ENCODE measurements at regions of chr3 and their contacts with region 1.

Region 1: GRCh38 chr3:72938471-72939265 is 50.8 kb downstream of the GXYLT2 start:
- DNase-seq: peak; percentile 74
- H3K4me3 ChIP-seq: no peak overlapping the region; a peak in 1 of 4 replicates
- H3K27ac ChIP-seq: peak overlapping the region; percentile 36 to 50
- H3K4me1 ChIP-seq: peaks cover 0 to 3% of the 10 kb centered on the region in 2 experiments; a peak in 2 of 4 replicates
- H3K27me3 ChIP-seq: no peaks in the 10 kb centered on the region
- CTCF ChIP-seq: peak; percentile 72
- EP300 ChIP-seq: no peak
- RAD21 ChIP-seq: peak; percentile 68

Region 2: DNA sequence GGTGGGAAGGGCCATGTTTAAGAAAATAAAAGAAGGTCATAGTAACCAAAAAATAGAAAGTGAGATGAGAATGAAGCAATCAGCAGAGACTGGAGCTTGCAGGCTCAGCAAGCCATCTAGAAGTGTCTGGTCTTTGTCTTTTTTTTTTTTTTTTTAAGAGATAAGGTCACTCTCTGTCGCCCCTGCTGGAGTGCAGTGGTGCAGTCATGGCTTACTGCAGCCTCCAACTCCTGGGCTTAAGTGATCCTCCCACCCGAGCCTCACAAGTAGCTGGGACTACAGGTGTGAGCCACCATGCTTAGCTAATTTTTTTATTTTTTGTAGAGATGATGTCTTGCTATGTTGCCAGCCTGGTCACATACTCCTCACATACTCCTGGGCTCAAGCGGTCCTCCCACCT is 14.6 kb before region 1 on chr3:
- CTCF ChIA-PET with region 1: interaction called, 14 read pairs
- POLR2A ChIA-PET with region 1: no interaction called
- DNase-seq: no peak
- H3K4me3 ChIP-seq: no peak overlapping the region
- H3K27ac ChIP-seq: no peak overlapping the region
- H3K4me1 ChIP-seq: no peaks in the 10 kb centered on the region
- H3K27me3 ChIP-seq: no peaks in the 10 kb centered on the region
- CTCF ChIP-seq: peak; percentile 28; the same call in 1 of the 2 replicates
- EP300 ChIP-seq: no peak
- RAD21 ChIP-seq: no peak

Region 3: DNA sequence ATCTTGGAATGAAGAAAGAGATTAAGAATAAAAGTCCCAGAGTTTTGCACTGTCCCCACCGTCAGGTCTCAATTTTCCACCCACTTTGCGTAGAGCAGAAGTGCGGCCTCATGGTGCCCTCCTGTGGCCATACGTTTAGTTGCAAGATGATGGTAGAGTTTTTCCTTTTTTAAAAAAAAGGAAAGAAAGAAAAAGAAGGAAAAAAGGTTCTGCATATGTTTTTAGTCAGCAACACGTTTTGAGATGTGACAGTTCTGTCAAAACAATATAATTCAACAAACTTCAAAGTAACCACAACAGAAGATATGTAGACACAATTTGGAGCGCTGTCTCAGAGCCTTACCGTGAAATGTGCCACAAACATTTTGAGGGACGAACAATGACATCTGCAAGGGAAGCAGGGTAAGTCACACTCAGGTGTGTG is 147.4 kb after region 1 on chr3:
- CTCF ChIA-PET with region 1: interaction called, 12 read pairs
- POLR2A ChIA-PET with region 1: no interaction called
- DNase-seq: peak; percentile 71
- H3K4me3 ChIP-seq: no peak overlapping the region; a peak in 1 of 4 replicates
- H3K27ac ChIP-seq: no peak overlapping the region
- H3K4me1 ChIP-seq: no peaks in the 10 kb centered on the region
- H3K27me3 ChIP-seq: no peaks in the 10 kb centered on the region
- CTCF ChIP-seq: peak; percentile 85
- EP300 ChIP-seq: no peak
- RAD21 ChIP-seq: peak; percentile 97